HepG2 (cell line): ENCODE measurements at regions of chr4 and their contacts with region 1.

Region 1: DNA sequence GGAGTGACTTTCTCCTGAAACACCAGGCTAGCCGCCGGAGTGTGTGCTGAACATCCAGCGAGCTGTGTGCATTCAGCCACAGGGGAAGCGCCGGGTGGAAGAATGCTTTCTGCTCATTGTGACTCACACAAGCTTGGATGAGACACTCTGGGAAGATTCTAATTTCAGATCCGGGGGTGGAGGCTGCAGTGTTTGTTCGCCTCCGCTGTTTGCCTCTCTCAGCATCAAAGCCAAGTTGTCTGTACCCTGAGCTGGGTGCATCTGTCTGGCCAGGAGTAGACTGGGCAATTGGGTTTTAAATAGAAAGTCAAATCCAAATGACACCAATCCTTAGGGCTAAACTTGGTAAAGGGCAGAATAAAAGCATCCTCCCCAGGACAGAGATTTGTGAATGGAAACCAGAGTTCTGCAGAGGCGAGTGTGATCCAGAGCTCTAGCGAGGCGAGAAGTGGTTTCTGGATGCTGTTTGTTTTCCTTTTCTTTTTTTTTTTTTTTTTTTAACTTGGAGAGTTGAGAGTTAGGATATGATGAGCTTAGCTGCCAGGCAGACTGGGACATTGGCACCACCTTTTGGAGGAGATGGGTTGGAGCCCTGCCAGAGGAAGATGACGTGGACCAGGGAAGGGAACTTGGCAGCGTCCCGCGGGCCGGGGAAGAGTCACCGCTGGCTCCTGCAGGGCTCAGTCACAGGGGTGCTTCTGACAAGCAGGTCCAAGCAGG is 196.0 kb upstream of the PSAPL1 start:
- DNase-seq: peak; percentile 79
- ATAC-seq: peak; percentile 89
- H3K4me3 ChIP-seq: peak overlapping the region in 1 of 3 experiments; percentile 19; a peak in 2 of 6 replicates
- H3K27ac ChIP-seq: peak overlapping the region; percentile 64
- H3K4me1 ChIP-seq: peaks cover 43% of the 10 kb centered on the region
- H3K27me3 ChIP-seq: no peaks in the 10 kb centered on the region
- CTCF ChIP-seq: no peak
- EP300 ChIP-seq: peak in 1 of 2 experiments; percentile 76; a peak in 2 of 4 replicates
- POLR2A ChIP-seq: no peak
- RAD21 ChIP-seq: no peak

Region 2: GRCh38 chr4:7531640-7531994 is 99.1 kb before region 1 on chr4:
- CTCF ChIA-PET with region 1: no interaction called
- POLR2A ChIA-PET with region 1: interaction called, 14 read pairs
- in situ Hi-C with region 1: no loop called
- intact Hi-C with region 1: loop called (anchors 10 kb)
- DNase-seq: no peak
- ATAC-seq: peak; percentile 56
- H3K4me3 ChIP-seq: peak overlapping the region; percentile 3 to 75 (median 52); a peak in 5 of 6 replicates
- H3K27ac ChIP-seq: peak overlapping the region; percentile 39
- H3K4me1 ChIP-seq: peaks cover 45% of the 10 kb centered on the region
- H3K27me3 ChIP-seq: peaks cover 0 to 2% of the 10 kb centered on the region in 2 experiments; a peak in 2 of 5 replicates
- CTCF ChIP-seq: no peak
- EP300 ChIP-seq: no peak
- POLR2A ChIP-seq: no peak
- RAD21 ChIP-seq: no peak; the same call in 1 of the 2 replicates

Region 3: DNA sequence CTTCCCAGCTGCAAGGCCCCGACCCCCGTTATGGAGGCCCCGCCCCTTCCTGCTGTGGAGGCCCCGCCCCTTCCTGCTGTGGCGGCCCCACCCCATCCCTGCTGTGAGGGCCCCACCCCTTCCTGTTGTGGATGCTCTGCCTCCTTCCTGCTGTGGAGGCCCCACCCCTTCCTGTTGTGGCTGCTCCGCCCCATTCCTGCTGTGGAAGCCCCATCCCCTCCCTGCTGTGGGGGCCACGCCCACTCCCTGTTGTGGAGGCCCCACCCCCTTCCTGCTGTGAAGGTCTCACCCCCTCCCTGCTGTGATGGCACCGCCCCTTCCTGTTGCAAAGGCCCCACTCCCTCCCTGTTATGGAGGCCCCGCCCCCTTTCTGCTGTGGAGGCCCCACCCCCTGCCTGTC is 91.1 kb before region 1 on chr4:
- CTCF ChIA-PET with region 1: no interaction called
- POLR2A ChIA-PET with region 1: no interaction called
- in situ Hi-C with region 1: no loop called
- intact Hi-C with region 1: loop called (anchors 10 kb)
- DNase-seq: peak; percentile 48
- ATAC-seq: peak; percentile 65
- H3K4me3 ChIP-seq: peak overlapping the region in 1 of 3 experiments; percentile 40; a peak in 1 of 6 replicates
- H3K27ac ChIP-seq: no peak overlapping the region
- H3K4me1 ChIP-seq: peaks cover 15% of the 10 kb centered on the region
- H3K27me3 ChIP-seq: no peaks in the 10 kb centered on the region
- CTCF ChIP-seq: no peak
- EP300 ChIP-seq: no peak
- POLR2A ChIP-seq: no peak
- RAD21 ChIP-seq: no peak

Region 4: GRCh38 chr4:7647600-7648543 is 17.1 kb after region 1 on chr4:
- CTCF ChIA-PET with region 1: no interaction called
- POLR2A ChIA-PET with region 1: interaction called, 10 read pairs
- in situ Hi-C with region 1: no loop called
- intact Hi-C with region 1: no loop called
- DNase-seq: peak; percentile 76
- ATAC-seq: peak; percentile 72
- H3K4me3 ChIP-seq: no peak overlapping the region
- H3K27ac ChIP-seq: peak overlapping the region; percentile 40
- H3K4me1 ChIP-seq: peaks cover 52% of the 10 kb centered on the region
- H3K27me3 ChIP-seq: no peaks in the 10 kb centered on the region
- CTCF ChIP-seq: no peak
- EP300 ChIP-seq: peak in 1 of 2 experiments; percentile 77; a peak in 2 of 4 replicates
- POLR2A ChIP-seq: no peak
- RAD21 ChIP-seq: no peak

Region 5: DNA sequence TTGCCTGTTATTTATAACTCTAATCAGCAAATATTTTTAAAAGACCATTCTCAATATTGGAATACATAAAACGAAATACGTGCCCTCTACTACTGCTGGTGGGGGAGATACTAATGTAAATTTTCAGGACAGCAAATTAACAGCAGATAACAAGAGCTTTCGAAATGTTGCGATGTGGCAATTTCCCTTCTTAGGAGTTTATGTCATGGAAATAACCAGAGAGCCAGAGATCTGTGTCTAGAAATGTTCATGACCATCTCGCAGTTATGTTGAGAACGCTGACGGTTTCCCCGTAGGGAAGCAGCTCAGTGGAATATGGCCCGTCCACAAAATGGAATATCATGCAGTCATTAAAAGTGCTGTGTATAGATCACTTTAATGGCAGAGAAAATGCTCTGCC is 42.4 kb after region 1 on chr4:
- CTCF ChIA-PET with region 1: no interaction called
- POLR2A ChIA-PET with region 1: interaction called, 22 read pairs
- in situ Hi-C with region 1: no loop called
- intact Hi-C with region 1: loop called (anchors 5 kb)
- DNase-seq: peak; percentile 45
- ATAC-seq: peak; percentile 7; the same call in 2 of the 3 replicates
- H3K4me3 ChIP-seq: peak overlapping the region in 2 of 3 experiments; percentile 42 to 58; a peak in 3 of 6 replicates
- H3K27ac ChIP-seq: peak overlapping the region; percentile 45
- H3K4me1 ChIP-seq: peaks cover 35% of the 10 kb centered on the region
- H3K27me3 ChIP-seq: no peaks in the 10 kb centered on the region
- CTCF ChIP-seq: no peak
- EP300 ChIP-seq: no peak
- POLR2A ChIP-seq: no peak
- RAD21 ChIP-seq: no peak

Region 6: DNA sequence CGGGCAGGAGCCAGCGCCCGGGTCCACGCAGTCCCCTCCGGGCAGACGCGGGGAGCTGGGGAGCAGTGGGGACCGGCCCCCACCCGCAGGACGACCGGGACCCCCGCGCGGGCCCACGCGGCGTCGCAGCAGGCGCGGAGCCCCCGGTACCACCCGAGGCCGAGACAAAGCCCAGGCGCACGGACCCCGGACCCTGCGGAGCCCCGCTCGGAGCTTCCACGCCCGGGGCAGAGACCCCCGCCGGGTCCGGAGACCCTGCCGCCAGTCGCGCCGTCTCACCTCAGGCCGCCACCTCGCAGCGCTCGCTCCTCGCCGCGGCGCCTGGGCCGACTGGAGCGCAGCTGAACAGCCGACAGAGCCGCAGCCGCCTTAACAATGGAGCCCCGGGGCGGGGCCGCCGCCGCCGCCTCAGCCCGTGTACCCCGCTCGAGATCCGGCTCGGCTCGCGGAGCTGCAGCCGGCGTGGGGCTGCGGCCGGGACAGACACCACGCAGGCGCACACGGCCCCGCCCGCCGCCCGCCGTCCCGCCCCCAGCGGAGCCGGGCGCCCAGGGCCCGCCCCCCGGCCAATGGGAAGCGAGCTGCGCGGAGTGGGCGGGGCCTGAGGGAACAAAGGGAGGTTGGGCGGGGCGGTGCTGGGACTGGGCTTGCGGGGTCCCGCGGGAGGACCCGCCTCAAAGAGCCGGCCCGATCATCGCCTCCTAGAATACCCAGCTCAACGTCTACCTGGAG is 308.8 kb after region 1 on chr4 and contains the start of gene AFAP1:
- CTCF ChIA-PET with region 1: no interaction called
- POLR2A ChIA-PET with region 1: no interaction called
- in situ Hi-C with region 1: no loop called
- intact Hi-C with region 1: no loop called
- DNase-seq: peak; percentile 66
- ATAC-seq: peak; percentile 89
- H3K4me3 ChIP-seq: peak within 1 kb of the TSS; percentile 63 to 85 (median 83)
- H3K27ac ChIP-seq: no peak within 1 kb of the TSS
- H3K4me1 ChIP-seq: peaks cover 58% of the 10 kb centered on the region
- H3K27me3 ChIP-seq: no peaks in the 10 kb centered on the region
- CTCF ChIP-seq: no peak
- EP300 ChIP-seq: no peak
- POLR2A ChIP-seq: peak in 1 of 2 experiments; percentile 54; a peak in 2 of 4 replicates
- RAD21 ChIP-seq: 0 out of 2 replicates have a peak, but pooled peaks have one; percentile 10
- total RNA-seq, gene AFAP1: 2.5 and 3.1 TPM in 2 replicates